ENCODE measurements at regions of chr16 and their contacts with region 1.

Region 1: GRCh38 chr16:79601931-79602627 is 1.5 kb upstream of the MAF start:
- DNase-seq: peak; percentile 45
- H3K27ac ChIP-seq: peak overlapping the region; percentile 97
- CTCF ChIP-seq: peak; percentile 73

Region 2: DNA sequence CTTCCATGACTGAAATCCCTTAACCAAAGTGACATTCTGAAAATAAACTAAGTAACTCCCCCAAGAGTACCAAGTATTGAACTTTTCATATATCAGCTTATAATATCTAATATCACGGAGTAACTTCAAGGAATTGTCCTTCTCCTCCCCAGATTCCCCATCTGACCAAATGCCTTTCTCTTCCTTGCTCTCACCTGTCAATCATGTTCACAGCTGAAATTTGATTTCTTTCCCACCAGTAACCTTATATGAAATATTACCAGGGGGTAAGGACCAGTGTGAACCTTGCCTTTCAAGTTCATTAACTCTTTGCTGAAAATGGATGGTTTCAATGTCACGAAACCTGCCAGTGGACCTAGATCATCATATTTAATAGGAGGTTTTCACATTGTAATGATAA is 17.8 kb before region 1 on chr16:
- CTCF ChIA-PET with region 1: no interaction called
- POLR2A ChIA-PET with region 1: no interaction called
- DNase-seq: no peak
- H3K27ac ChIP-seq: no peak overlapping the region
- CTCF ChIP-seq: no peak

Region 3: GRCh38 chr16:79728039-79728922 is 126.2 kb after region 1 on chr16:
- CTCF ChIA-PET with region 1: interaction called, 10 read pairs
- POLR2A ChIA-PET with region 1: no interaction called
- DNase-seq: no peak
- H3K27ac ChIP-seq: no peak overlapping the region
- CTCF ChIP-seq: no peak

Region 4: GRCh38 chr16:80006241-80007215 is 404.4 kb after region 1 on chr16:
- CTCF ChIA-PET with region 1: interaction called, 11 read pairs
- POLR2A ChIA-PET with region 1: no interaction called
- DNase-seq: peak; percentile 62
- H3K27ac ChIP-seq: no peak overlapping the region
- CTCF ChIP-seq: no peak

Measured in RWPE1 (cell line).